Heart right ventricle (tissue), 16 donors: ENCODE measurements at regions of chr11 and their contacts with region 1.

Region 1: GRCh38 chr11:134145715-134146114 is 76.8 kb downstream of the JAM3 start:
- DNase-seq: no peak
- ATAC-seq: no peak
- H3K4me3 ChIP-seq: no peak overlapping the region
- H3K27ac ChIP-seq: no peak overlapping the region
- H3K4me1 ChIP-seq: peaks cover 0 to 6% (median 0%) of the 10 kb centered on the region in 9 donors
- H3K27me3 ChIP-seq: no peaks in the 10 kb centered on the region
- CTCF ChIP-seq: no peak

Region 2: GRCh38 chr11:133927690-133928627 is 217.8 kb before region 1 on chr11:
- intact Hi-C with region 1: loop called in 7 of 10 experiments (anchors 5 to 10 kb)
- DNase-seq: peak; percentile 57 to 67
- ATAC-seq: peak; percentile 74 to 88 (median 82)
- H3K4me3 ChIP-seq: peak overlapping the region in 5 of 10 donors; percentile 13 to 41 (median 17)
- H3K27ac ChIP-seq: peak overlapping the region in 1 of 10 donors; percentile 20
- H3K4me1 ChIP-seq: peaks cover 5 to 22% (median 14%) of the 10 kb centered on the region in 9 donors
- H3K27me3 ChIP-seq: no peaks in the 10 kb centered on the region
- CTCF ChIP-seq: peak; percentile 67 to 91 (median 86)

Region 3: DNA sequence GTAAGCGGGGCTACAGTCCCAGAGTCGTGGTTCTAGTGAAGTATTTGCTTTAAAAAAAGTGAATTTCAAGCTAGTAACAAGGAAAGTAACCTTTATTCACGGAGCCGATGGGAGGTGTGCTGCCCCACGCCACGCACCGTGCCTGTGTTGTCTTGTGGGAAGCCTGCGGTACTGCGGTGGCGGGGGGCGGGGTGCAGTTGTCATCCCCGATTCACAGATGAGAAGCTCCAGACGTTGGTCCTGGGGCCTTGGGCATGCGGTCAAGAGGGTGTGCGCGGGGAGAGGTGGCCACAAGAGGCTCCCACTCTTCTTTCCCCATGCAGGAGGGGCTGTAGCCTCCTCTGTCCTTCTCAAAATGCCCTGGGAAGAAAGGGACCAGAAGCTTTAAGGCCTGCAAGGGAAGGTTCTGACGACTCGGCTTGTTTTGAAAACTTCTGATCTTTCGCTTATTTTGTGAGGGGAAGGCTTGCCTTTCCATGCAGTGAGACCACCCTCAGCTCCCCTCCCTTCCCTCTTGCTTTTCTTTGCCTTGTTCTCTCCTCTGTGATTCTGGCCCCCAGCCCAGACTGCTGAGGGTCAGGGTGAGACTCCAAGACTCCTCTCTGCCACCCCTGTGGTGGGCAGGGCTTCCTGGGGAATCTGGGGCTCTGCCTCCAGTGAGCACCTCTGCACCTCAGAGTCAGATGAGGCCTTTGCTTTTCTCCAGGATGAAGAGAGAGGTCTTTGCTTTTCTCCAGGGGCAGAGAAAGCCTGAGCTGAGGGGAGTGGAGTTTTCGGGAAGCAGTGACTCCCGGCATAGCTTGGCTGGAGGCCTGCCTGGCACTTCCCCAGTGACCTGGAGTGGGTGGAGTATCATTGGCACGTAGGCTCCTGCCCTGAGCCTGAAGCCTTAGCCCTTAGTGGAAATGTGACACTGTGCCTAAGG is 136.7 kb after region 1 on chr11:
- intact Hi-C with region 1: no loop called
- DNase-seq: no peak
- ATAC-seq: peak in 2 of 8 donors; percentile 75 to 92
- H3K4me3 ChIP-seq: no peak overlapping the region
- H3K27ac ChIP-seq: no peak overlapping the region
- H3K4me1 ChIP-seq: peaks cover 0 to 3% (median 0%) of the 10 kb centered on the region in 9 donors
- H3K27me3 ChIP-seq: peaks cover 3 to 42% (median 32%) of the 10 kb centered on the region in 7 donors
- CTCF ChIP-seq: no peak